ENCODE measurements at regions of chr3 and their contacts with region 1.

Region 1: GRCh38 chr3:41893977-41894376 is 67.9 kb downstream of the ULK4 start:
- DNase-seq: no peak
- H3K4me3 ChIP-seq: no peak overlapping the region
- H3K27ac ChIP-seq: no peak overlapping the region
- H3K4me1 ChIP-seq: peaks cover 10% of the 10 kb centered on the region
- H3K27me3 ChIP-seq: no peaks in the 10 kb centered on the region
- CTCF ChIP-seq: peak; percentile 68

Region 2: DNA sequence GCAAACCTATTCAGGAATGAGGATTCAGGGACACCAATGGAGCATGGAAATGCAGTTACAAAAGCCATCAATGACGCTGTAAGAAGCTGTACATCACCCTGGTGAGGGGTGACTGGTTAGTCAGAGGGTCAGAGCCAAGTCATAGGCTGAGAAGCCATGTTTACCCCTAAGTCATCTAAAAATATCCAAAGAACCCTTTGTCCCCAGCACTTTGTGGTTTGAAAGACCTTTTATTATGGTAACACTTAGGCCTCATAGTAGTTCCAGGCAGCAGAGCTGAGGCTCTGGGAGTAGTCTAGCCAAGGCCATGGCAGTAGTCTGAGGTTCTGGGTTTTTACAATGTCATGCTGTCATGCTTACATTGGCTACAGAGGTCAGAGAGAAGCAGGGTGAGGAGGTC is 563.5 kb before region 1 on chr3:
- intact Hi-C with region 1: no loop called
- DNase-seq: no peak
- H3K4me3 ChIP-seq: no peak overlapping the region
- H3K27ac ChIP-seq: no peak overlapping the region
- H3K4me1 ChIP-seq: peaks cover 13% of the 10 kb centered on the region
- H3K27me3 ChIP-seq: no peaks in the 10 kb centered on the region
- CTCF ChIP-seq: no peak

Region 3: DNA sequence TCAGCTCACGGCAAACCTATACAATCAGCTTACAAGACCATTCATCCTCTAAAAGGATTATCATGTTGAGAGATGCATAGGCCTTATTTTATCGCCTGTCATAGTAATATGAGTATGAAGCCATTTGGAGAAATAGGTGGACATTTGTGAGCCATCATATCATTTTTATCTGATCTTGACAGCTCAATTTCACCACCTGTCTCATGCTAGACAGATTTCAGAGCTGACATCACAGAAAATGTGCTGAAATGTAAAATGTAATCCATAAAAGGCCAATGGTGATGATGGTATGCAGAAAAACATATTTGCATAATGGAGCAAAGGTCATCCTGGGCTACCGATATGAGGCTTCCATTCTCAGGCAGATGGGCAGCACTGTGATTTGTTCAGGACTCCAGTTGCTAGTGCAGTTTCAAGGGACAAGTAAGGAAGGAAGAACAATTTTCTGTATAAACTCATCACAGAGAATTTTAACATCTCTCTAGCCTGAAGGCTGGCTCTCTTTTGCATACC is 153.5 kb before region 1 on chr3:
- intact Hi-C with region 1: no loop called
- DNase-seq: no peak
- H3K4me3 ChIP-seq: no peak overlapping the region
- H3K27ac ChIP-seq: no peak overlapping the region
- H3K4me1 ChIP-seq: no peaks in the 10 kb centered on the region
- H3K27me3 ChIP-seq: no peaks in the 10 kb centered on the region
- CTCF ChIP-seq: no peak

Region 4: GRCh38 chr3:42101048-42101447 is 207.1 kb after region 1 on chr3:
- intact Hi-C with region 1: loop called (anchors 5 kb)
- DNase-seq: peak; percentile 45
- H3K4me3 ChIP-seq: no peak overlapping the region
- H3K27ac ChIP-seq: peak overlapping the region; percentile 87
- H3K4me1 ChIP-seq: peaks cover 74% of the 10 kb centered on the region
- H3K27me3 ChIP-seq: no peaks in the 10 kb centered on the region
- CTCF ChIP-seq: no peak

Region 5: DNA sequence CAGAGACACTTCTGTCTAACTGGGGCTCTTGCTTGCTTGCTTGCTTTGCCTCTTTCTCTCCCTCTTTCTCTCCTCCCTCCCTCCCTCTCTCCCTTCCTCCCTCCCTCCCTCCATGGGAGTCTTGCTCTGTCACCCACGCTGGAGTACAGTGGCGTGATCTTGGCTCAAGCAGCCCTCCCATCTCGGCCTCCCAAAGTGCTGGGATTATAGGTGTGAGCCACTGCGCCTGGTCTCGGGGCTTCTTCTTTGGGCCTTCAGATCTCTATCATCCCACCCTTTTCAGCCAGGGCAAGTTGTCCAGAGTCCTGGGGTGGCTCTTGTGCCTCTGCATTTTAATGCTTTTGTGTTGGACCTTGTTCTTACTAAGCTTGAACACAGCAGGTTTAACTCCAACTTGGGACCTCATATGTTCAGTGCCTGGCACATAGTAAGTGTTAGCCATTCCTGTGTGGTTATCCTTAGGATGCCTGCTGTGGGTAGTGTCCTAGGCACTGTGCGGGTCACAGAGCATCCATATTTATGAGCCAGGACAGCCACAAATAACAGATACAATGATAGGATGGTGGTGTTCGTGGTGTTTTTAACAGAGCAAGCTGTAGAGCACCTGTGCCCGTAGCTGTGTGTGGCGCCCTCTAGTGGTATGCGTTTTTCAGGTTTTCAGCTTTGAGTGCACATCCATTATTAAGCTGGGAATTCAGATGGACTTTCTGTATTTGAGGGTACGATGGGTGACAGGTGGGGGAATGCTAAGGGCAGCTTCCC is 296.9 kb after region 1 on chr3:
- intact Hi-C with region 1: loop called (anchors 10 kb)
- DNase-seq: no peak
- H3K4me3 ChIP-seq: no peak overlapping the region
- H3K27ac ChIP-seq: peak overlapping the region; percentile 77
- H3K4me1 ChIP-seq: peaks cover 74% of the 10 kb centered on the region
- H3K27me3 ChIP-seq: no peaks in the 10 kb centered on the region
- CTCF ChIP-seq: peak; percentile 89

Region 6: GRCh38 chr3:42443819-42444436 is 550.0 kb after region 1 on chr3:
- intact Hi-C with region 1: loop called (anchors 10 kb)
- DNase-seq: peak; percentile 79
- H3K4me3 ChIP-seq: no peak overlapping the region
- H3K27ac ChIP-seq: no peak overlapping the region
- H3K4me1 ChIP-seq: no peaks in the 10 kb centered on the region
- H3K27me3 ChIP-seq: peaks cover 42% of the 10 kb centered on the region
- CTCF ChIP-seq: peak; percentile 99

Measured in left ventricle myocardium inferior (tissue), 1 donor.